A549 (cell line): ENCODE measurements at regions of chr19 and their contacts with region 1.

Region 1: GRCh38 chr19:2427429-2428320 is at the start of gene TIMM13:
- DNase-seq: peak; percentile 78 to 94
- ATAC-seq: peak; percentile 87 to 90
- H3K4me3 ChIP-seq: peak within 1 kb of the TSS; percentile 95
- H3K27ac ChIP-seq: peak within 1 kb of the TSS; percentile 97 to 99
- H3K4me1 ChIP-seq: peaks cover 17% of the 10 kb centered on the region; the same call in 2 of the 3 replicates
- CTCF ChIP-seq: no peak
- EP300 ChIP-seq: no peak
- POLR2A ChIP-seq: peak; percentile 4; the same call in 1 of the 2 replicates
- RAD21 ChIP-seq: no peak
- polyA plus RNA-seq, gene TIMM13: 23.9 and 24.7 TPM in 2 replicates

Region 2: DNA sequence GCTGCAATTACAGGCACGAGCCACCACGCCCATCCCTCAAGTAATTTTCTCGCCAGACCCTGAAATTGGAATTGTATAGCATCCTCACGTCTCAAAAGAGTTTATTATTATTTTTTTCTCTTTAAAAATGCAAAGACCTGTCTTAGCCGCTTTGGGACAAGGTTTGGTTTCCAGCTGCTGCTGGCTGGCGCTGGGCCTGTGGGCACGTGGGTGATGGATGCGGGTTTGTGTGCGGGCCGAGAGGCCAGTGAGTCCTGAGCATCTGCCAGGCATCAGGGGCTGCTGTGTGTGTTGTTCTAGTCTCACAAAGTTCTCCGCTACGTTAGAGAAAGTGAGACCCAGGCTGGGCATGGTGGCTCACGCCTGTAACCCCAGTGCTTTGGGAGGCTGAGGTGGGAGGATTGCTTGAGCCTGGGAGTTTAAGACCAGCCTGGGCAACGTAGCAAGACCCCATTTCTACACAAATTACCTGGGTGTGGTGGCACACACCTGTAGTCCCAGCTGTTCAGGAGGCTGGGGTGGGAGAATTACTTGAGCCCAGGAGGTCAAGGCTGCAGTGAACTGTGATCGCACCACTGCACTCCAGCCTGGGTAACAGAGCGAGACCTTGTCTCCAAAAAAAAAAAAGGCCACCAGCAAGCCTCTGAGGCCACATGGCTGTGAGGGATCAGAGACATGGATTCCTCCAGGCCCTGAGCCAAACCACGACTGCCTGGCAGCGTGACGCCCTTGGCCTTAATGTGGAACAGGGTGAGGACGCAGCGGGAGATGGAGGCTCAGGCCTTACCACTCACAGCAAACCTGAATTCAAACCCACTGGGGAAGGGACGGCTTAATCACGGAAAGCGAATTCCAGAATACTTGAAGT is 72.3 kb before region 1 on chr19:
- CTCF ChIA-PET with region 1: no interaction called
- POLR2A ChIA-PET with region 1: no interaction called
- DNase-seq: no peak
- ATAC-seq: no peak
- H3K4me3 ChIP-seq: no peak overlapping the region
- H3K27ac ChIP-seq: no peak overlapping the region
- H3K4me1 ChIP-seq: no peaks in the 10 kb centered on the region
- CTCF ChIP-seq: no peak
- EP300 ChIP-seq: no peak
- POLR2A ChIP-seq: no peak
- RAD21 ChIP-seq: no peak

Region 3: DNA sequence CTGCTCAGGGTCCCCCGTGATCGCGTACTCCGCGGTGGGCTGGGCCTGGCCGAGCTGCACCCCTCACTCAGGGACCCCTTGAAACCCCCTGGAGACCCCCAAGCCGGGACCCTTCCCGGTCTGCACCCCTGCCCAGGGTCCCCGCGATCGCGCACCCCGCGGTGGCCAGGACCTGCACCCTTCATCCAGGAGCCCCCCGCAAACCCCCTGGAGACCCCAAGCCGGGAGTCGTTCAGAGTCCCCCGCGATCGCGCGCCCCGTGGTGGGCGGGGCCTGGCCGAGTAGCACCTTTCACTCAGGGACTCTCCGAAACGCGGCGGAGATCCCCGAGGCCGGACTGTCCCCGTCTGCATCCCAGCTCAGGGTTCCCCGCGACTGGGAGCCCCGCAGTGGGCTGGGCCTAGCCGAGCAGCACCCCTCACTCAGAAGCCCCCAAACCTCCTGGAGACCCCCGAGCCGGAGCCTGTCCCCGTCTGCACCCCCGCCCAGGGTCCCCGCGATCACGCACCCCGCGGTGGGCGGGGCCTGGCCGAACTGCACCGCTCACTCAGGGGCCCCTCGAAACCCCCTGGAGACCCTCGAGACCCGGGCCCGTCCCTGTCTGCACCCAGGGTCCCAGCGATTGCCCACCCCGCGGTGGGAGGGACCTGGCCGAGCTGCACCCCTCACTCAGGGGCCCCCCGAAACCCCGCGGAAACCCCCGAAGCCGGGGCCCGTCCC is 28.3 kb after region 1 on chr19:
- CTCF ChIA-PET with region 1: interaction called, 3 read pairs
- POLR2A ChIA-PET with region 1: interaction called, 14 read pairs
- DNase-seq: no peak
- ATAC-seq: peak; percentile 42 to 49; a peak in 2 of 6 replicates
- H3K4me3 ChIP-seq: peak overlapping the region; percentile 98
- H3K27ac ChIP-seq: peak overlapping the region; percentile 95 to 100
- H3K4me1 ChIP-seq: peaks cover 16% of the 10 kb centered on the region; the same call in 1 of the 3 replicates
- CTCF ChIP-seq: no peak
- EP300 ChIP-seq: no peak
- POLR2A ChIP-seq: no peak
- RAD21 ChIP-seq: no peak